OCI-LY7 (cell line): ENCODE measurements at regions of chr1 and their contacts with region 1.

Region 1: GRCh38 chr1:31422505-31423319 is 9.7 kb downstream of the SERINC2 start:
- DNase-seq: peak; percentile 79
- H3K4me3 ChIP-seq: peak overlapping the region; percentile 57
- H3K27ac ChIP-seq: peak overlapping the region; percentile 75
- H3K4me1 ChIP-seq: peaks cover 33% of the 10 kb centered on the region
- CTCF ChIP-seq: peak; percentile 96

Region 2: GRCh38 chr1:31084782-31085569 is 337.7 kb before region 1 on chr1:
- CTCF ChIA-PET with region 1: no interaction called
- POLR2A ChIA-PET with region 1: no interaction called
- intact Hi-C with region 1: no loop called
- DNase-seq: no peak
- H3K4me3 ChIP-seq: no peak overlapping the region
- H3K27ac ChIP-seq: no peak overlapping the region
- H3K4me1 ChIP-seq: no peaks in the 10 kb centered on the region
- CTCF ChIP-seq: no peak

Region 3: DNA sequence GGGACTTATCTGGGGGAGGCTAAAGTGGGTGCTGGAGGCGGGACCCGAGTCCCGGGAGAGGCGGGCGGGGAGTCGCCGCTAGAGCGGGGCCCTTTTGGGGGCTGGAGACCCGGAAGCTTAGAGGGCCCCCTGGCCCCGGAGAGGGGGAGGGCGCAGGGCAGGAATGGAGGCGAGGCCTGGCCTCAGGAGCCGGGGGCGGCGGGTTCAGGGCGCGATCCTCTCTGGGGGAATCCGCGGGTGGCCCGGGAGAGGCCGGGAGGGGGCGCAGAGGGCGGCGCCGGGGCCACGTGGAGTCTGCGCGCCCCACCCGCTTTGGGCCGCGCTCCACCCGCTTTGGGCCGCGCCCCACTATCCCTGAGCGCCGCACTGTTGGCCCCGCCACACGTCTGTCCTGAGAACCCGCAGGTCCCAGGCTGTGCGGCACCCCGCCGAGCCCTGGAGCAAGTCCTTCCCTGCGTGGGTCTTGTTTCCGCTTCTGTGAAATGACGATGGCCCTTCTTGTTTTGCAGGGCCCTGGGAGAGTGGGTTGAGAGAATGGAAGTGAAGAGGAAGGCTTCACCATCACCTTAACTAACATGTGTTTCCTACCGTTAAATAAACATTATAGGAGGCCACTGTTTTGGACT is 267.4 kb before region 1 on chr1:
- CTCF ChIA-PET with region 1: no interaction called
- POLR2A ChIA-PET with region 1: no interaction called
- intact Hi-C with region 1: loop called (anchors 5 kb)
- DNase-seq: peak; percentile 77
- H3K4me3 ChIP-seq: peak overlapping the region; percentile 93
- H3K27ac ChIP-seq: peak overlapping the region; percentile 40
- H3K4me1 ChIP-seq: peaks cover 23% of the 10 kb centered on the region
- CTCF ChIP-seq: peak; percentile 51

Region 4: GRCh38 chr1:31183873-31184554 is 238.7 kb before region 1 on chr1:
- CTCF ChIA-PET with region 1: interaction called, 3 read pairs
- POLR2A ChIA-PET with region 1: interaction called, 3 read pairs
- intact Hi-C with region 1: loop called (anchors 1 kb)
- DNase-seq: peak; percentile 64
- H3K4me3 ChIP-seq: no peak overlapping the region
- H3K27ac ChIP-seq: no peak overlapping the region
- H3K4me1 ChIP-seq: peaks cover 6% of the 10 kb centered on the region
- CTCF ChIP-seq: peak; percentile 92

Region 5: GRCh38 chr1:31296486-31297276 is 126.0 kb before region 1 on chr1 and contains the starts of genes SNRNP40 and ZCCHC17:
- CTCF ChIA-PET with region 1: interaction called, 3 read pairs
- POLR2A ChIA-PET with region 1: no interaction called
- intact Hi-C with region 1: loop called (anchors 2 kb)
- DNase-seq: peak; percentile 99
- H3K4me3 ChIP-seq: peak within 1 kb of the TSS; percentile 90
- H3K27ac ChIP-seq: peak within 1 kb of the TSS; percentile 67
- H3K4me1 ChIP-seq: peaks cover 25% of the 10 kb centered on the region
- CTCF ChIP-seq: 0 out of 2 replicates have a peak, but pooled peaks have one; percentile 39
- total RNA-seq, gene SNRNP40: 190 and 202 TPM in 2 replicates
- total RNA-seq, gene ZCCHC17: 30.1 and 37.4 TPM in 2 replicates

Region 6: GRCh38 chr1:31394628-31395193 is 28.0 kb before region 1 on chr1:
- CTCF ChIA-PET with region 1: interaction called, 3 read pairs
- POLR2A ChIA-PET with region 1: interaction called, 3 read pairs
- intact Hi-C with region 1: loop called (anchors 1 kb)
- DNase-seq: peak; percentile 82
- H3K4me3 ChIP-seq: peak overlapping the region; percentile 62
- H3K27ac ChIP-seq: no peak overlapping the region
- H3K4me1 ChIP-seq: peaks cover 14% of the 10 kb centered on the region
- CTCF ChIP-seq: peak; percentile 89

Region 7: GRCh38 chr1:31548907-31549808 is 126.4 kb after region 1 on chr1:
- CTCF ChIA-PET with region 1: interaction called, 7 read pairs
- POLR2A ChIA-PET with region 1: interaction called, 7 read pairs
- intact Hi-C with region 1: loop called (anchors 1 kb)
- DNase-seq: peak; percentile 87
- H3K4me3 ChIP-seq: peak overlapping the region; percentile 2
- H3K27ac ChIP-seq: no peak overlapping the region
- H3K4me1 ChIP-seq: peaks cover 10% of the 10 kb centered on the region
- CTCF ChIP-seq: peak; percentile 99